Activated CD8-positive, alpha-beta T cell treated with anti-CD3 and anti-CD28 coated beads, Interleukin-2, amount 10 ng/mL, durations not matched to agents 7 days and 5 days (primary cell): ENCODE measurements at regions of chr11 and their contacts with region 1.

Region 1: DNA sequence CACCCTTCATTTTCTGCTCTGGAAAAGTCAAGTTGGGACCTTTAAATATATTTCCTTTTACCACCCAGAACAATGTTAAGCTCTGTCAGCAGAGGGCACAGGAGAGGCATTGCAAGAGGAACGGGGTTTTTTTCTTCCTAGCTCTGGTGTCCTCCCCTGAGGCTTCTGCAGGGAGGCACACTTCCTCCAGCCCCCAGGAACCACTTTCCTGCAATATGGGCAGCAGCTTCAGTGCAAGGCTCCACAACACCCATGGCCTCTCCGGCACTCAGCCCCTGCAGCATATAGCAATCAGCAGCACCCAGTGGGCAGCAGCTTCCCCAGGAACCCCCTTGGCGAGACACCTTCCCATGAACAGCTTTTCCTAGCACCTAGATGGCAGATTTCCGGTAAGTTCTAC is 101.4 kb downstream of the SYT9 start:
- DNase-seq: peak; percentile 39
- ATAC-seq: no peak
- H3K4me3 Mint-ChIP-seq: no peak overlapping the region
- H3K27ac Mint-ChIP-seq: no peak overlapping the region
- H3K4me1 Mint-ChIP-seq: no peaks in the 10 kb centered on the region
- H3K27me3 Mint-ChIP-seq: peaks cover 6% of the 10 kb centered on the region

Region 2: DNA sequence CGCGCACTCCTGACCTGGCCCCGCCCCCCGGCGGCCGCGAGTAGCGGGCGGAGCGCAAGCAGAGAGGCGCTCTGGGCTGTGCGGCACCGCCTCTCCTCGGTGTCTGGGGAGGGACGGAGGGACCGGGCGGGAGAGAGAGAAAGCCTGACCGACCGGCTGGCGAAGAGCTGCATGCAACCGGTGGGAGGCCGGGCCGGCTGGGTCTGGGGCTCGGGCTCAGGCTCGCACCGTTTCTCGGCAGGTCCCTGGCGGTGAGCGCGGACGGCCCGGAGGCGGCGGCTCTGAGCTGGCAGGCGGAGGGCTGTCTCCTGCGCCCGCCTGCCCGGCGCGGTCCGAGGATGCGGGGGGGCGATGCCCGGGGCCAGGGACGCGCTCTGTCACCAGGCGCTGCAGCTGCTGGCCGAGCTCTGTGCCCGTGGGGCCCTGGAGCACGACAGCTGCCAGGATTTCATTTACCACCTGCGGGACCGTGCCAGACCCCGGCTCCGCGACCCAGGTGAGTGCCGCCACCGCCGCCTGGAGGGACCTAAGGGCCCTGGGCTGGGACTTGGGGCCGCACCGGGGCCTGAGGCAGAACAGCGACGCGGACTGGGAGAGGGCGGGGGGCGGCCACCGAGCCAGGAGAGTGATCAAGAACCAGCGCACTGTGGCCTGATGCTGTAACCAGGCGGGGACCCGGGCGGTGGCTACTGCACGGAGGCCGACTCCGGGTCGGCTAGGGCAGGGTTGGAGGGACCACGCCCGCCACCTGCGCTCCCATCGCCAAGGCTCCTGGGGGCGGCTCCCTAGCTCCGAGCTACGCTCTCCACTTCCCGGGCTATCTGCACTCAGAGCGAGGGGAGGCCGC is 101.0 kb before region 1 on chr11 and contains the start of gene SYT9:
- CTCF ChIA-PET with region 1: no interaction called
- POLR2A ChIA-PET with region 1: no interaction called
- DNase-seq: peak; percentile 21
- ATAC-seq: peak; percentile 93
- H3K4me3 Mint-ChIP-seq: peak within 1 kb of the TSS; percentile 40
- H3K27ac Mint-ChIP-seq: no peak within 1 kb of the TSS
- H3K4me1 Mint-ChIP-seq: peaks cover 1% of the 10 kb centered on the region
- H3K27me3 Mint-ChIP-seq: peaks cover 54% of the 10 kb centered on the region
- total RNA-seq, gene SYT9: not detected

Region 3: GRCh38 chr11:7436657-7437056 is 83.6 kb after region 1 on chr11:
- CTCF ChIA-PET with region 1: interaction called, 47 read pairs
- POLR2A ChIA-PET with region 1: no interaction called
- DNase-seq: peak; percentile 49
- ATAC-seq: peak; percentile 78
- H3K4me3 Mint-ChIP-seq: peak overlapping the region; percentile 7
- H3K27ac Mint-ChIP-seq: peak overlapping the region; percentile 84
- H3K4me1 Mint-ChIP-seq: peaks cover 23% of the 10 kb centered on the region
- H3K27me3 Mint-ChIP-seq: no peaks in the 10 kb centered on the region

Region 4: GRCh38 chr11:7442588-7443215 is 89.6 kb after region 1 on chr11:
- CTCF ChIA-PET with region 1: interaction called, 47 read pairs
- POLR2A ChIA-PET with region 1: no interaction called
- DNase-seq: peak; percentile 81
- ATAC-seq: peak; percentile 86
- H3K4me3 Mint-ChIP-seq: no peak overlapping the region
- H3K27ac Mint-ChIP-seq: no peak overlapping the region
- H3K4me1 Mint-ChIP-seq: peaks cover 3% of the 10 kb centered on the region
- H3K27me3 Mint-ChIP-seq: no peaks in the 10 kb centered on the region